ENCODE measurements at regions of chr22 and their contacts with region 1.

Region 1: DNA sequence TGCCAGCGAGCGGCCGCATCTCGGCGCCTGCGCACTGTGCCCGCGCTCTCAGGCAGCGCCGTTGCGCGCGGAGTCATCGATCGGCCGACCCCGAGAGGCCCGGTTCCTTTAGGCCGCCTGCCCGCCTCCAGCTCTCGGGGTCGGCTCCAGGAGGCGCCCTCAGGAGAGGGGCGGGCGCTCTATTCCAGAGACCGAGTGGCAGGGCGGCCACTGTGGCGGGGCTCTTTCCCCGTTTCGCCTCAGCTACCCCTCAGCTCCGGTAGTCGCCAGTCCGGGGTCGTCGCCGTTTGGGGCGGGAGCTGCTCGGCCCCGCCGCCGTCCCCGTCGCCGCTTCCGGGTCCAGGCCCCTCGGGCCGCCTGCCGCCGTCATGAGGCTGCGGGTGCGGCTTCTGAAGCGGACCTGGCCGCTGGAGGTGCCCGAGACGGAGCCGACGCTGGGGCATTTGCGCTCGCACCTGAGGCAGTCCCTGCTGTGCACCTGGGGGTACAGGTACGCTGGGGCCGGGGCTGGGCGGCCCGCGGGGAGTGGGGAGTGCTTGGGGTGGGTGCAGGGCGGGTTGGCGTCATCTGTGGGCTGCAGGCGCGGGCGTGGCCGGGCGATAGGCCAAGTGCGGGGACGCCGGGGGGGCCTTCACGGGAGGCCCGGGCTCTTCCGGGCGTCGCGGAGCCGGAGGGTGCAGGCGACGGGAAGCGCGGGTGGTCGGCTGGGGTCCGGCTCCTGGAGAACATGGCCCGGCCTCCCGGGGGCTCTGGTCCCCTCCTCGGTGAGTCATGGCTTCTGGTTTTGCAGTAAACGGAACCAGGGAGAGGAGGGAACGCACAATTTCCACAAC is at the start of gene FBXO7:
- DNase-seq: peak; percentile 92
- CTCF ChIP-seq: peak; percentile 36

Region 2: DNA sequence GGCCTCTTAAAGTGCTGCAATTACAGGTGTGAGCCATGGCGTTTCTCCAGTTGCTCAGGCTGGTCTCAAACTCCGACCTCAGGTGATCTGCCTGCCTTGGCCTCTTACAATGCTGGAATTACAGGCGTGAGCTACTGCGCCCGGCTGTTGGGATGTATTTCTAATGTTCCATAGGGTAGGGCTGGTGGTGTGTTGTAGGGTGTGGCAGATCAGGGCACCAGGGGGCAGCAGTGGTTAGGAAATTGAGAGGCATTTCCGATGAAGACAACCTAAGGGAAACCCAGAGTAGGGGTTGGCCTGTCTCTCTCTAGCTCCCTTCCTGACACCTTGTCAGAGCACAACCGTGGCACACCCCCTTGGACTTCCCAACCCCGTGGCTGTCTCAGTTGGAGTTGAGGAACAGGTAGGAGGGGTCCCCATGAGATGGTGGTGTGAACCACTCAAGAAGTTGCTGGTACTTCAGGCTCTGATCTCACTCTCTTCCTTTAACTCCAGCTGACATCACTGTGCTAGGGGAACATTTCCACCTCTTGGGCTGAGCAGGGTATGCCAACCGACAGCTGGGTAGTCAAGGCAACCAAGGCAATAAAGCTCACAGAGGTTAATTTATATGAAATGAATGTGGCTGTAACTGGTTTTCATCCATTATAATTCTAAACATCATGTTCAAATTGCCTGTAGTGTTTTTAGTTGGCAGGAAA is 497.6 kb before region 1 on chr22:
- in situ Hi-C with region 1: loop called (anchors 25 kb)
- DNase-seq: peak; percentile 78
- CTCF ChIP-seq: peak; percentile 84

Region 3: GRCh38 chr22:32579509-32580234 is 104.8 kb after region 1 on chr22:
- in situ Hi-C with region 1: no loop called
- DNase-seq: no peak
- CTCF ChIP-seq: no peak

Measured in GM13977 (cell line).